ENCODE measurements at regions of chr10 and their contacts with region 1.

Region 1: DNA sequence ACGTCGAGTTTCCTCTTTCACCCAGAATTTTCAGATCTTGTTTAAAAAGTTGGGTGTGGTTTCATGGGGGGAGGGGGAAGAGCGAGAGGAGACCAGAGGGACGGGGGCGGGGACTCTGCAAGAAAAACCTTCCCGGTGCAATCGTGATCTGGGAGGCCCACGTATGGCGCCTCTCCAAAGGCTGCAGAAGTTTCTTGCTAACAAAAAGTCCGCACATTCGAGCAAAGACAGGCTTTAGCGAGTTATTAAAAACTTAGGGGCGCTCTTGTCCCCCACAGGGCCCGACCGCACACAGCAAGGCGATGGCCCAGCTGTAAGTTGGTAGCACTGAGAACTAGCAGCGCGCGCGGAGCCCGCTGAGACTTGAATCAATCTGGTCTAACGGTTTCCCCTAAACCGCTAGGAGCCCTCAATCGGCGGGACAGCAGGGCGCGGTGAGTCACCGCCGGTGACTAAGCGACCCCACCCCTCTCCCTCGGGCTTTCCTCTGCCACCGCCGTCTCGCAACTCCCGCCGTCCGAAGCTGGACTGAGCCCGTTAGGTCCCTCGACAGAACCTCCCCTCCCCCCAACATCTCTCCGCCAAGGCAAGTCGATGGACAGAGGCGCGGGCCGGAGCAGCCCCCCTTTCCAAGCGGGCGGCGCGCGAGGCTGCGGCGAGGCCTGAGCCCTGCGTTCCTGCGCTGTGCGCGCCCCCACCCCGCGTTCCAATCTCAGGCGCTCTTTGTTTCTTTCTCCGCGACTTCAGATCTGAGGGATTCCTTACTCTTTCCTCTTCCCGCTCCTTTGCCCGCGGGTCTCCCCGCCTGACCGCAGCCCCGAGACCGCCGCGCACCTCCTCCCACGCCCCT is at the start of gene VIM:
- DNase-seq: peak; percentile 94

Region 2: GRCh38 chr10:16853201-16853600 is 375.1 kb before region 1 on chr10:
- in situ Hi-C with region 1: loop called (anchors 25 kb)
- DNase-seq: peak; percentile 57

Region 3: DNA sequence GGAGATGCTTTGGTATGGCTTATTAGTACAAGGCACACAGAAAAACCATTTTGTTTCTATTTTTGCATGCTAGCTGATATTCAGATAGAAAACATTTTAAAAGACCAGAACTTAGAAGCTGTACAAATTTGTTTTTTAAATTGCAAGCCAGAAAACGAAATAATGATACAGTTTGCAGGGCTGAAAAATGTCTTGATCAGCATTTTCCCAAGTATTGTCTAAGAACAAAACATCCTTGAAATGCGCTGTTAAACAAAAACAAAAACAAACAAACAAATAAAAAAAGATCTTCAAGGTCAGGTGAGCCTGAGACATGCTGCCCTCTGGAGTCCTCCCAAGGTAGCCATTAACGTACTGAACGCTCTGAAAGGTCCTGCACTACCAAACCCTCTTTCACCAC is 98.1 kb after region 1 on chr10:
- in situ Hi-C with region 1: no loop called
- DNase-seq: no peak